B cell (primary cell): ENCODE measurements at regions of chr5 and their contacts with region 1.

Region 1: GRCh38 chr5:57173185-57174127 is at the start of gene GPBP1:
- DNase-seq: peak; percentile 99
- ATAC-seq: peak; percentile 76
- H3K4me3 ChIP-seq: peak within 1 kb of the TSS; percentile 87 to 100 (median 97)
- H3K4me3 Mint-ChIP-seq: peak within 1 kb of the TSS; percentile 97
- H3K27ac ChIP-seq: peak within 1 kb of the TSS; percentile 98 to 100
- H3K27ac Mint-ChIP-seq: peak within 1 kb of the TSS; percentile 98
- H3K4me1 ChIP-seq: peaks cover 42 to 46% of the 10 kb centered on the region in 2 donors
- H3K4me1 Mint-ChIP-seq: peaks cover 38% of the 10 kb centered on the region
- H3K27me3 ChIP-seq: no peaks in the 10 kb centered on the region
- H3K27me3 Mint-ChIP-seq: no peaks in the 10 kb centered on the region
- CTCF ChIP-seq: no peak
- total RNA-seq, gene GPBP1: 152 and 159 TPM in 2 replicates

Region 2: DNA sequence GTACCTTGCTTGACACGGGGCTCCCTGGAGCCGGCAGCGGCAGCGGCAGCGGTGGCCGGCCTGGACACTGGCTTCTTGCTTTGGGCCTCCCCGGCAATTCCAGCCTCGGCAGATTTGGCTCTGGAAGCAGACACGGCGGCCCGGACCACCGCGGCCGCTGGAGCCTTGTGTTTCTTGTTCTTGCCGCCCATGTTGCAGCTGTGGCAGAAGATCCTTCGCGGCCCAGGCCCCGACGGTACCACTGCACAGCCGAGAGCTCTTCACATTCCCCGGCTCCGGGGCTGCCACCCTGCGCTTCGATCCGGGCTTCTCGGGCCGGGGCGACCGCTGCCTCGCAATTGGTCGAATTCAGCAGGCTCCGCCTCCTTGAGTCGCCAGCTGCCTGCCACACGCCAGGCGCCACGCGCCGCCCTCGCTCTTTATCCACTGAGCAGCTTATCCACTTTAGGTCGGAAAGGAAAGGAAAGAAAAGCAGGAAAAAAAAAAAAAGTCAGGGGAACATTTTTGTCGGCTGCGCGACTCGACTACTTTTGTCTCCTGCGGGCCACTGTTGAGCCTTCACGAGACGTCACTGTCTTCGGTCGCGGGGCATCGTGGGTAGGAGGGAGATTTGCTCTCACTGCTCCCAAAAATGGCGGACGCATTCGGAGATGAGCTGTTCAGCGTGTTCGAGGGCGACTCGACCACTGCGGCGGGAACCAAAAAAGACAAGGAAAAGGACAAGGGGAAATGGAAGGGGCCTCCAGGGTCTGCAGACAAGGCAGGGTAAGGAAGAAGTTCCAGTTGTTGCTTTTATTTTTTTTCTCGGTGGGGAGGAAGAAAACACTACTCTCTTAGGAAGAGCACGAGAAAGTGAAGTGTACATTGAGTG is 1865.8 kb before region 1 on chr5 and contains the starts of genes DHX29 and MTREX:
- CTCF ChIA-PET with region 1: no interaction called
- POLR2A ChIA-PET with region 1: interaction called, 3 read pairs
- intact Hi-C with region 1: loop called (anchors 10 kb)
- DNase-seq: peak; percentile 93
- ATAC-seq: peak; percentile 91
- H3K4me3 ChIP-seq: peak within 1 kb of the TSS; percentile 68 to 99 (median 96)
- H3K4me3 Mint-ChIP-seq: no peak within 1 kb of the TSS
- H3K27ac ChIP-seq: peak within 1 kb of the TSS; percentile 88 to 98
- H3K27ac Mint-ChIP-seq: no peak within 1 kb of the TSS
- H3K4me1 ChIP-seq: peaks cover 45 to 46% of the 10 kb centered on the region in 2 donors
- H3K4me1 Mint-ChIP-seq: peaks cover 33% of the 10 kb centered on the region
- H3K27me3 ChIP-seq: no peaks in the 10 kb centered on the region
- H3K27me3 Mint-ChIP-seq: no peaks in the 10 kb centered on the region
- CTCF ChIP-seq: no peak
- total RNA-seq, gene DHX29: 17.9 and 18.1 TPM in 2 replicates
- total RNA-seq, gene MTREX: 91.7 and 94.0 TPM in 2 replicates

Region 3: DNA sequence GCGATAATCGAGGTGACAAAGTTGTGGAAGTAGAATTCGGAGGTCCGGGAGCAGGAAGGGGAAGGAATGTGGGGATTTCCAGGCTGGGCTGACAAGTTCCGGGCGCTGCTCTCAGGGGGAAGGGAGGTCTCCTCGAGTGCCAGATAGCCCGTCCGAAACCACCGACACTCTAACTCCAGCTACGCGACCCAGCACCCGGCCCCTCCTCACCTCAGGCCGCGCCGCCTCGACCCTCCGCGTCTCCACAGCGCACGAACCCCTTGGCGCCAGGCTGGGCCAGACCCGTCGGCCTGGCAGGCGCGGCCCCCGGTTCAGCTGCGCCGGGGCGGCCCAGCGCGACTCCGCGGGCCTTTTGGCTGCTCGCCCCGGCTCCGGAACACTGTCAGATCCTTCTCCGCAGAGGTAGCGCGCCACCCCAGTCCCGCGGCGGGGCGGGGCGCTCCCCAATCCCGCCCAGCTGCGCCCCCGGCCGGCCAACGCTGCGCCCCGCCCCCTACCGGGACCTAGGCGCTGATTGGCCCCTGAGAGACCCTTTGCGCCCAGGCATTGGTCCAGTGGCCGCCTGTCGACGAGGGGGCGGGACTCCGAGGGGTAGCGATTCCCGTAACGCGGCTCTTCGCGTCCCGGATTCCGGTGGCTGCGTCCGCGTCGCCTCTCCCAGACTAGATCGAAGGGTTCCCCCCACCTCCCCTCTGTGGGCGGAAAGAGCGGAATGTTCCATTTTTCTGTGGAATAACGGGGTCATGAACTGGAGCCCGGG is 1178.7 kb before region 1 on chr5 and contains the start of gene IL6ST:
- CTCF ChIA-PET with region 1: no interaction called
- POLR2A ChIA-PET with region 1: no interaction called
- intact Hi-C with region 1: loop called (anchors 1 kb)
- DNase-seq: peak; percentile 96
- ATAC-seq: peak; percentile 94
- H3K4me3 ChIP-seq: peak within 1 kb of the TSS; percentile 75 to 97 (median 91)
- H3K4me3 Mint-ChIP-seq: peak within 1 kb of the TSS; percentile 89
- H3K27ac ChIP-seq: peak within 1 kb of the TSS; percentile 75 to 94
- H3K27ac Mint-ChIP-seq: peak within 1 kb of the TSS; percentile 78
- H3K4me1 ChIP-seq: peaks cover 11 to 18% of the 10 kb centered on the region in 2 donors
- H3K4me1 Mint-ChIP-seq: peaks cover 33% of the 10 kb centered on the region
- H3K27me3 ChIP-seq: no peaks in the 10 kb centered on the region
- H3K27me3 Mint-ChIP-seq: peaks cover 4% of the 10 kb centered on the region
- CTCF ChIP-seq: no peak
- total RNA-seq, gene IL6ST: 28.0 and 31.1 TPM in 2 replicates

Region 4: DNA sequence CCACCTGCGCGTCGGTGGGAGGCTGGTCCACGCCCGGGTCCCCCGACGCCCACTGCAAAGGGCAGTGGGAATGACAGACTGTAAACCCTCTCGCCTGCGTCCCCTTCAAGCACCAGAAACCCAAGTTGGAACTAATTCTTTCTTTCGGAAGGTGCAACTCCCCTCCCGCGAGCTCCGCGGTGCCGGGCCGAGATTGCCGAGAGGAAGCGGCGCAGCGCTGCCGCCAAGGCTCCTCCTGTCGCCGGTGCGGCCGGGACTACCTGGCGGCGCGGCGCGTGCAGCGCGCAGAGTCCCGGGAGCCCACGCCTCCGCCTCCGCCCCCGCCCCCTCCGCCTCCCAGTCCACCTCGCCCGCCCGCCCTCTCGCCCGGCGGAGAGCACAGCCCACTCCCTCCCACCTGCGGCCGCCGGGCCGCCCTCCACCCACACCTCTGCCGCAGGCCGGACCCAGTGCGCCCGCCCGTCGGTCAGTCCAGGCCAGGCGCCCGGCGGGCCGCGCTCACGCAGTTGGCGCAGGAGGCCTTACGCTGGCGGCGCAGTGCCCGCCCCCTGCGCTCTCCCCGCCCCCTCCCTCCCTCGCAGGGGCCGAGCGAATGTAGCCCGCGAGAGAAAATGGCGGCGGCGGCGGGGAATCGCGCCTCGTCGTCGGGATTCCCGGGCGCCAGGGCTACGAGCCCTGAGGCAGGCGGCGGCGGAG is 358.3 kb before region 1 on chr5 and contains the start of gene MAP3K1:
- CTCF ChIA-PET with region 1: no interaction called
- POLR2A ChIA-PET with region 1: no interaction called
- intact Hi-C with region 1: loop called (anchors 5 kb)
- DNase-seq: peak; percentile 93
- ATAC-seq: peak; percentile 65
- H3K4me3 ChIP-seq: peak within 1 kb of the TSS; percentile 73 to 97 (median 87)
- H3K4me3 Mint-ChIP-seq: peak within 1 kb of the TSS; percentile 97
- H3K27ac ChIP-seq: peak within 1 kb of the TSS; percentile 91 to 94
- H3K27ac Mint-ChIP-seq: peak within 1 kb of the TSS; percentile 99
- H3K4me1 ChIP-seq: peaks cover 25 to 29% of the 10 kb centered on the region in 2 donors
- H3K4me1 Mint-ChIP-seq: peaks cover 44% of the 10 kb centered on the region
- H3K27me3 ChIP-seq: no peaks in the 10 kb centered on the region
- H3K27me3 Mint-ChIP-seq: no peaks in the 10 kb centered on the region
- CTCF ChIP-seq: no peak
- total RNA-seq, gene MAP3K1: 160 and 164 TPM in 2 replicates

Region 5: DNA sequence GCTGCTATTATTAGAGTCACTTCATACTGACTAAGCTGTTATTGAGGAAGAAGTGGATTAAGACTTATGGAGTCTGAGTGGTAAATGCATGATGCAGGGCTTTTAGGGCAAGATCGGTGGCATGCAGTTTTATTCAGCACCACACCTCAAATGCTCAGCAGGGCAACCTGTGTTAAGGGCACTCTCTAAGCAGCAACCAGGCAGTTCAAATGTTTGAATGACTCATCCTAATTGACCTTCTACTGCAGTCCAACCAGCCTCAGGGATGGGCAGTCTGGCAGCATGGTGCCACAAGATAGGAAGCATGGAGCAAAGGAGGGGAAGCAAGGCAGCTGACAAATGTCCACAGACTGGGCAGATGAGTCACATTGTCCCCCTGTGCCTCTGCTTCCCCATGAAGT is 141.3 kb before region 1 on chr5:
- CTCF ChIA-PET with region 1: no interaction called
- POLR2A ChIA-PET with region 1: no interaction called
- intact Hi-C with region 1: loop called (anchors 5 kb)
- DNase-seq: no peak
- ATAC-seq: no peak
- H3K4me3 ChIP-seq: no peak overlapping the region
- H3K4me3 Mint-ChIP-seq: no peak overlapping the region
- H3K27ac ChIP-seq: no peak overlapping the region
- H3K27ac Mint-ChIP-seq: no peak overlapping the region
- H3K4me1 ChIP-seq: peaks cover 22 to 24% of the 10 kb centered on the region in 2 donors
- H3K4me1 Mint-ChIP-seq: peaks cover 23% of the 10 kb centered on the region
- H3K27me3 ChIP-seq: no peaks in the 10 kb centered on the region
- H3K27me3 Mint-ChIP-seq: peaks cover 4% of the 10 kb centered on the region
- CTCF ChIP-seq: no peak

Region 6: GRCh38 chr5:57054671-57055070 is 118.8 kb before region 1 on chr5:
- CTCF ChIA-PET with region 1: no interaction called
- POLR2A ChIA-PET with region 1: no interaction called
- intact Hi-C with region 1: no loop called
- DNase-seq: no peak
- ATAC-seq: no peak
- H3K4me3 ChIP-seq: no peak overlapping the region
- H3K4me3 Mint-ChIP-seq: no peak overlapping the region
- H3K27ac ChIP-seq: no peak overlapping the region
- H3K27ac Mint-ChIP-seq: no peak overlapping the region
- H3K4me1 ChIP-seq: no peaks in the 10 kb centered on the region
- H3K4me1 Mint-ChIP-seq: no peaks in the 10 kb centered on the region
- H3K27me3 ChIP-seq: no peaks in the 10 kb centered on the region
- H3K27me3 Mint-ChIP-seq: peaks cover 16% of the 10 kb centered on the region
- CTCF ChIP-seq: no peak

Region 7: GRCh38 chr5:57199866-57200265 is 26.4 kb after region 1 on chr5:
- CTCF ChIA-PET with region 1: no interaction called
- POLR2A ChIA-PET with region 1: no interaction called
- intact Hi-C with region 1: loop called (anchors 2 kb)
- DNase-seq: no peak
- ATAC-seq: no peak
- H3K4me3 ChIP-seq: no peak overlapping the region
- H3K4me3 Mint-ChIP-seq: peak overlapping the region; percentile 44
- H3K27ac ChIP-seq: peak overlapping the region in 1 of 2 donors; percentile 54
- H3K27ac Mint-ChIP-seq: no peak overlapping the region
- H3K4me1 ChIP-seq: peaks cover 13 to 36% of the 10 kb centered on the region in 2 donors
- H3K4me1 Mint-ChIP-seq: peaks cover 50% of the 10 kb centered on the region
- H3K27me3 ChIP-seq: no peaks in the 10 kb centered on the region
- H3K27me3 Mint-ChIP-seq: no peaks in the 10 kb centered on the region
- CTCF ChIP-seq: no peak